Motor neuron (in vitro differentiated cells): ENCODE measurements at regions of chr16 and their contacts with region 1.

Region 1: GRCh38 chr16:1119766-1120576 is 23.9 kb upstream of the C1QTNF8 start:
- ATAC-seq: peak in 2 of 8 experiments; percentile 4 to 20
- H3K4me3 ChIP-seq: no peak overlapping the region
- H3K27ac ChIP-seq: peak overlapping the region in 1 of 2 donors; percentile 41
- H3K4me1 ChIP-seq: peaks cover 69 to 74% of the 10 kb centered on the region in 2 donors

Region 2: GRCh38 chr16:886084-886543 is 233.9 kb before region 1 on chr16:
- in situ Hi-C with region 1: no loop called
- ATAC-seq: peak in 5 of 8 experiments; percentile 83 to 88 (median 87)
- H3K4me3 ChIP-seq: peak overlapping the region in 1 of 5 donors; percentile 14
- H3K27ac ChIP-seq: peak overlapping the region; percentile 51 to 63
- H3K4me1 ChIP-seq: peaks cover 13 to 20% of the 10 kb centered on the region in 2 donors

Region 3: GRCh38 chr16:1069154-1069553 is 50.8 kb before region 1 on chr16:
- in situ Hi-C with region 1: no loop called
- ATAC-seq: peak in 1 of 8 experiments; percentile 39
- H3K4me3 ChIP-seq: no peak overlapping the region
- H3K27ac ChIP-seq: no peak overlapping the region
- H3K4me1 ChIP-seq: peaks cover 30 to 31% of the 10 kb centered on the region in 2 donors

Region 4: DNA sequence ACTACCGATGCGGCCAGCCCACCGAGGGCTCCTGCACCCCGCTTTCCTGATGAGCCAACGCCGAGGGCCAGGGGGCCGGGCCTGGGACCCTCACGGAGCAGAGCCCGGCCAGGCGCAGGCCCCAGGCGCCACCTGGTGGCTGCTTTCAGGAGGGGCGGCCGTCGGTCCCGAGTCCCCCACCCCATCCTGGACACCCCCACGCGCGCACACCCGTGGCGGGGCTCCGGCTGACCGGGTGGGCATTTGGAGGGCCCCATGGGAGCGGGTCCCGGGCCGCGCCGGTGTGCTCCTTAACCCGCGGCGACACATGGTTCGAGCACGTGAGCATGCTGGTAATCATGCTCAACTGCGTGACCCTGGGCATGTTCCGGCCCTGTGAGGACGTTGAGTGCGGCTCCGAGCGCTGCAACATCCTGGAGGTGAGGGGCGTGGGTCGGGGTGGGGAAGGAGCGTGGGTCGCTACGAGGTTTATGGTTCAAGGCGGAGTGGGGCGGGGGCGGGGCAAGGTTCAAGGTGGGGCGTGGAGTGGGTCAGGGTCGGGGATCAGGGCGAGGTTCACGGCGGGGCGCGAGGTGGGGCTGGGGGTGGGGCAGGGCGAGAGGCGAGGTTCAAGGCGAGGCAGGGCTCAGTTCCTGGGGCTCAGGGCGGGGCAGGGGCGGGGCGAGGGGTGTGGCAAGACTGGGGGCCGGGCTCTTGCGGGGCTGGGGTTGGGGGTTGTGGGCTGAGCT is 74.9 kb after region 1 on chr16:
- in situ Hi-C with region 1: loop called in 2 of 9 experiments (anchors 10 kb)
- ATAC-seq: peak in 5 of 8 experiments; percentile 46 to 61 (median 51)
- H3K4me3 ChIP-seq: no peak overlapping the region
- H3K27ac ChIP-seq: peak overlapping the region in 1 of 2 donors; percentile 38
- H3K4me1 ChIP-seq: peaks cover 21% of the 10 kb centered on the region in 2 donors